Lower leg skin (tissue), 4 donors: ENCODE measurements at regions of chr18 and their contacts with region 1.

Region 1: GRCh38 chr18:79630281-79631095 is 49.1 kb upstream of the CTDP1 start:
- DNase-seq: peak in 1 of 2 donors; percentile 83
- H3K4me3 ChIP-seq: no peak overlapping the region
- CTCF ChIP-seq: no peak
- POLR2A ChIP-seq: no peak

Region 2: DNA sequence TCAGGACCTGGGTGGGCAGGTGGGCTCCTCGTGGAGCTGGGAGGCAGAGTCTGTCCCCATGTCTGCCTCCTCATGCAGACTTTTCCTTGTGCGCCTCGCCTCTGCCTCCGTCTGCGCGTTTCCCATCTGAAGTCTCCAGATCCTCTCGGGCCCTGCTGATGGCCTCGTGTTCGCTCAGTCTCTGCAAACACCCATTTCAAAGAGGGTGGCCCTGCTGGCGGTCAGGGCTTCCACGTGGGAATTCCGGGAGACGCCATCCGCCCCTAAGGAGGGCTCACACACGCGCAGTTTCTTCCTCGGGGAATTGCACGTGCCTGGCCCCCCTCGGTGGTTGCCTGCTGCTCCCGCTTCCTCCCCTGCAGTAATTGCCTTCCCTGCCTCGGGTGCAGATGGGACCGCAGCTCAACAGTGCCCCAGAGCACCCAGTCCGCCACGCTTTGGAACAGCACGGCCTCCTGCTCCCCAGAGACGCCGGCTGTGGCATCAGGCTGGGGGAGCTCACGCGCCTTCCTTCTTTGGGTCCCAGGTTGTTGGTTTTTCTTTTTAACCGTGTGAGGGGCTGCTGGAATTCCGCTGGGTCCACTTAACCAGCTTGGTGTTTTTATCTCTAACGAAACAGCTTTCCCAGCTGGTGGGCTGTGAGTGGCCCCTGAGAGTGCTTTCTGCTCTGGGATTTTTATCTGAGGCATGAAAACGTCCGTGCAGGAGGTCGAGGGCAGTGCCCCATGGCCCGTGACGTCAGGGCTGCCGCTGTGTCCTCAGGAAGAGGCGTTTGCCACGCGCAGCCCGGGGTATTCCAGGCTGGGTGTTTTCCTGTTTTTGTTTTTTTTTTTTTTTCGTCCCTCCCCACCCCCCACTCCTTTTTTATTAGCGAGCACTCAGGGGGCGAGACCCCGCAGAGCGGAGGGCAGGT is 218.6 kb before region 1 on chr18:
- intact Hi-C with region 1: no loop called
- DNase-seq: no peak
- H3K4me3 ChIP-seq: no peak overlapping the region
- CTCF ChIP-seq: no peak
- POLR2A ChIP-seq: no peak

Region 3: DNA sequence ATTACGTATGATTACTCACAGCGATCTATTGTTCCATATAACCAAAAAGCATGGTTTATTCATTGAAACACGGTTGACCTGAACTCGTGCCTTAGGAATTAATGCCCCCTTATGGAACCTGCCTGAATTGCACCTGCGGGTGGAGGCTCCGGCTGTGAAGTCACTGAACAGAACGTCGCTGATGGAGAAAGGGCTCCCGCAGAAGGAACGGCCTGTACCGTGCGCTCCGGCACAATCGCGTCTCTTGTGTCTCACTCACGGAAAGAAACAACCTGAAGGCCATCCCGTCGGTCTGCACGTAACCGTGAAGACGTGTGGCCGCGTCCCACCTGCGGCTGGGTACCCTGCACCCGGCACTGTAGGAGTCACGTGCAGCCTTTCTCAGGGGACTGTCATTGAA is 101.6 kb before region 1 on chr18:
- intact Hi-C with region 1: loop called (anchors 10 kb)
- DNase-seq: peak in 1 of 2 donors; percentile 64
- H3K4me3 ChIP-seq: no peak overlapping the region
- CTCF ChIP-seq: peak in 1 of 3 donors; percentile 70
- POLR2A ChIP-seq: no peak

Region 4: DNA sequence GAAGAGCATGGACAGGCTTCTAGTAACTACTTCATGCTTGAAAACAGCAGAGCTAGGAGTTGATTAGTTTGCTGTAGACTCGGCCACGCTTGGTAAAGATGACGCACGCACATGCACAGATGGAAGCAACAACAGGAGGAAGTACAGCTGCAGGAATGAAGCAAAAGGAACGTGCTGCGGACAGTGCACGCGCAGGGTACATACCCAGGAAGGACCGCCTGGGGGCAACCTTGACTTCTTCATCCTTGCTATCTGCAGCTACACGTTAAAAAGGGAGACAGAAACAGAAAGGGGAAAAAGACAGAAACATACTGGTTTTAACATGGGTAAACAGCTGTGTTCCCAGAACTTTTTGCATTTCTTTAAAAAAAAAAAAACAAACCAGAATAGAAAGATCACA is 303.3 kb after region 1 on chr18:
- intact Hi-C with region 1: no loop called
- DNase-seq: peak in 1 of 2 donors; percentile 66
- H3K4me3 ChIP-seq: no peak overlapping the region
- CTCF ChIP-seq: no peak
- POLR2A ChIP-seq: no peak